Heart left ventricle (tissue), 16 donors: ENCODE measurements at regions of chr4 and their contacts with region 1.

Region 1: GRCh38 chr4:22515145-22515887 is 550 bp downstream of the ADGRA3 start:
- DNase-seq: peak; percentile 59 to 75 (median 60)
- ATAC-seq: peak; percentile 68 to 83 (median 76)
- H3K4me3 ChIP-seq: peak overlapping the region; percentile 33 to 85 (median 62)
- H3K27ac ChIP-seq: peak overlapping the region; percentile 32 to 91 (median 83)
- H3K4me1 ChIP-seq: peaks cover 0 to 24% (median 15%) of the 10 kb centered on the region in 12 donors
- H3K27me3 ChIP-seq: peaks cover 0 to 13% (median 0%) of the 10 kb centered on the region in 9 donors
- CTCF ChIP-seq: peak in 3 of 12 donors; percentile 24 to 44 (median 37)
- POLR2A ChIP-seq: no peak

Region 2: DNA sequence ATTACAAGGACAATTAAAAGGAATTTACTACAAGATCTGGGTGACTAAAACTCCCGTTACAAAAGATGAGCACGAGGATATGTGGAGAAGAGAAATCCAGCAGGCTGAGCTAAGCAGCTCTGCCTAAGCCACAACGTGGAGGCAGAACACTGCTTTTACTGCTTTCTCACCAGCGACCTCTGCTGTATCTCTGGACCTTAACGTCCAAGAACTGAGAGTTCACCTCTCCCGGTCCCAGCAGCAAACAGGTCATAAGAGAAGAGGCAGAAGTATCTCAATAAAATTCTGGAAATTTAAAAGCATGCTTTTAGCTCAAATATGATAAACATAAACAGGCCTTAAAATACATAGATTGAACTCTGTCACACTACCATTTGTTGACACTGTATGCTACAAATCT is 80.4 kb before region 1 on chr4:
- intact Hi-C with region 1: loop called in 2 of 10 experiments (anchors 10 kb)
- DNase-seq: peak in 4 of 5 donors; percentile 20 to 41 (median 30)
- ATAC-seq: peak; percentile 71 to 85 (median 78)
- H3K4me3 ChIP-seq: no peak overlapping the region
- H3K27ac ChIP-seq: no peak overlapping the region
- H3K4me1 ChIP-seq: no peaks in the 10 kb centered on the region
- H3K27me3 ChIP-seq: no peaks in the 10 kb centered on the region
- CTCF ChIP-seq: peak in 11 of 12 donors; percentile 17 to 55 (median 38)
- POLR2A ChIP-seq: no peak

Region 3: GRCh38 chr4:22463179-22463578 is 52.1 kb before region 1 on chr4:
- intact Hi-C with region 1: loop called in 2 of 10 experiments (anchors 5 kb)
- DNase-seq: no peak
- ATAC-seq: no peak
- H3K4me3 ChIP-seq: no peak overlapping the region
- H3K27ac ChIP-seq: no peak overlapping the region
- H3K4me1 ChIP-seq: peaks cover 0 to 12% (median 0%) of the 10 kb centered on the region in 12 donors
- H3K27me3 ChIP-seq: no peaks in the 10 kb centered on the region
- CTCF ChIP-seq: no peak
- POLR2A ChIP-seq: no peak